Naive thymus-derived CD4-positive, alpha-beta T cell (primary cell): ENCODE measurements at regions of chr10 and their contacts with region 1.

Region 1: GRCh38 chr10:28241741-28242399 is 61.0 kb downstream of the MPP7 start:
- DNase-seq: peak in 7 of 9 donors; percentile 16 to 54 (median 43)
- ATAC-seq: peak; percentile 90
- H3K4me3 ChIP-seq: no peak overlapping the region
- H3K4me3 Mint-ChIP-seq: no peak overlapping the region
- H3K27ac ChIP-seq: no peak overlapping the region
- H3K27ac Mint-ChIP-seq: no peak overlapping the region
- H3K4me1 ChIP-seq: peaks cover 0 to 12% of the 10 kb centered on the region in 2 donors
- H3K4me1 Mint-ChIP-seq: peaks cover 5 to 59% (median 39%) of the 10 kb centered on the region in 7 donors
- H3K27me3 ChIP-seq: no peaks in the 10 kb centered on the region
- H3K27me3 Mint-ChIP-seq: peaks cover 0 to 12% (median 0%) of the 10 kb centered on the region in 5 donors

Region 2: DNA sequence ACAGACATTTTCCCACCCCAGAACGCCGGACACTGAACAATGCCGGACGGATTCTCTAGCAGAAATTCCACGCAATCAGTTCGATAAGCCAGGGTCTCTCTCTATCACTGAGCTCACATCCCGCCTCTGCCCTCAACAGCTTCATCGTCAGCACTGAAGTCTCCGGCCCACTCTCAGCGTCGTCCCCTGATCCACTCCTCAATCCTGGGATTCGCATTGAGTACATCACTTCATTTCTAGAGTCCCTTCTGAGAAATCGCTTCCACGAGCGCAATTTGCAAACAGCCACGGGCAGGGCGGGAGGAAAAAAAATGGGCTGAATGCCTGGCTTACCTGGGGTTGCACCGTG is 1088.1 kb before region 1 on chr10:
- CTCF ChIA-PET with region 1: no interaction called
- POLR2A ChIA-PET with region 1: no interaction called
- intact Hi-C with region 1: no loop called
- DNase-seq: no peak
- ATAC-seq: no peak
- H3K4me3 ChIP-seq: peak overlapping the region; percentile 90
- H3K4me3 Mint-ChIP-seq: peak overlapping the region; percentile 91 to 100 (median 99)
- H3K27ac ChIP-seq: peak overlapping the region; percentile 99
- H3K27ac Mint-ChIP-seq: peak overlapping the region; percentile 100
- H3K4me1 ChIP-seq: peaks cover 13 to 17% of the 10 kb centered on the region in 2 donors
- H3K4me1 Mint-ChIP-seq: peaks cover 34 to 69% (median 50%) of the 10 kb centered on the region in 7 donors
- H3K27me3 ChIP-seq: no peaks in the 10 kb centered on the region
- H3K27me3 Mint-ChIP-seq: peaks cover 0 to 2% (median 0%) of the 10 kb centered on the region in 5 donors

Region 3: GRCh38 chr10:27446091-27446918 is 795.6 kb before region 1 on chr10:
- CTCF ChIA-PET with region 1: interaction called, 3 read pairs
- POLR2A ChIA-PET with region 1: no interaction called
- intact Hi-C with region 1: loop called (anchors 1 to 5 kb)
- DNase-seq: peak in 6 of 9 donors; percentile 23 to 58 (median 46)
- ATAC-seq: peak; percentile 65
- H3K4me3 ChIP-seq: no peak overlapping the region
- H3K4me3 Mint-ChIP-seq: peak overlapping the region in 3 of 10 donors; percentile 20 to 53 (median 23)
- H3K27ac ChIP-seq: no peak overlapping the region
- H3K27ac Mint-ChIP-seq: peak overlapping the region in 1 of 9 donors; percentile 32
- H3K4me1 ChIP-seq: no peaks in the 10 kb centered on the region
- H3K4me1 Mint-ChIP-seq: peaks cover 6 to 19% (median 17%) of the 10 kb centered on the region in 7 donors
- H3K27me3 ChIP-seq: no peaks in the 10 kb centered on the region
- H3K27me3 Mint-ChIP-seq: peaks cover 0 to 16% (median 0%) of the 10 kb centered on the region in 5 donors

Region 4: DNA sequence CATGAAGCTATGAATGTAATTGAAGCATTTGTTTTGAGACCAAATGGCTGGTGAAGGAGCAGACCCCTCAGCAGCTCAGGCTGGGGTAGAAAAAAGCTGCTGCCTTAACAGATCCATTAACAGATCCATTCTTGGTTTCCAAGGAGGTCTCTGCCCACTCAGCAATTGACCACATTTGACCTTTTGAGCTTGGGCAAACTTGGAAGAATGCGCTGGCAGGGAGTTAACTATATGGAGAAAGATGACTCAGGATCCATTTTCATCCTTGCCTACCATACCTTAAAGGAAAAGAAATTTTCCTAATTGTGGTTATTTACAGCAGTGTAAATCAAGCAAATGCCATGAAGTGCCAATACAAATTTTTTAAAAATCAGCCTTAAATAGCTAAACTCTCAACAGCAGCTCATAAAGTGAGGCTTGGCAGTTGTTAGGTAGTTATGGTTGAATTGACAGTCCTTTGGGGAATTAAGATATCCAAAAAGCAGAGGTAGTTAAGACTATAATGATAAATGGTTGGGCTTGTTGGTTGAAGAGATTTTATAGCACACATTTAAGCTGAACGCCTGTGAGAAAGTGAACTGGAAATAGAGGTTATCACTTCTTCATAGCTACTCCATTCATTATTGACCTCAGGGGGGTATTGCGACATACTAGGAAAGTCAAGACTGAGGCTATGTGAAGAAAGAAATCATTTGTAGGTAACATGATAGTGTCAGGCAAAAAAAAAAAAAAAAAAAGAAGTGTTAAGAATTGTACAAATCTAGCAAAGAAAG is 580.2 kb before region 1 on chr10:
- CTCF ChIA-PET with region 1: no interaction called
- POLR2A ChIA-PET with region 1: no interaction called
- intact Hi-C with region 1: loop called in 1 of 2 experiments (anchors 5 kb)
- DNase-seq: no peak
- ATAC-seq: no peak
- H3K4me3 ChIP-seq: no peak overlapping the region
- H3K4me3 Mint-ChIP-seq: no peak overlapping the region
- H3K27ac ChIP-seq: no peak overlapping the region
- H3K27ac Mint-ChIP-seq: no peak overlapping the region
- H3K4me1 ChIP-seq: no peaks in the 10 kb centered on the region
- H3K4me1 Mint-ChIP-seq: peaks cover 0 to 7% (median 0%) of the 10 kb centered on the region in 7 donors
- H3K27me3 ChIP-seq: peaks cover 0 to 4% of the 10 kb centered on the region in 2 donors
- H3K27me3 Mint-ChIP-seq: peaks cover 31 to 53% (median 39%) of the 10 kb centered on the region in 5 donors

Region 5: GRCh38 chr10:27865221-27865638 is 376.6 kb before region 1 on chr10:
- CTCF ChIA-PET with region 1: no interaction called
- POLR2A ChIA-PET with region 1: no interaction called
- intact Hi-C with region 1: loop called in 1 of 2 experiments (anchors 5 kb)
- DNase-seq: no peak
- ATAC-seq: no peak
- H3K4me3 ChIP-seq: no peak overlapping the region
- H3K4me3 Mint-ChIP-seq: no peak overlapping the region
- H3K27ac ChIP-seq: no peak overlapping the region
- H3K27ac Mint-ChIP-seq: no peak overlapping the region
- H3K4me1 ChIP-seq: no peaks in the 10 kb centered on the region
- H3K4me1 Mint-ChIP-seq: no peaks in the 10 kb centered on the region
- H3K27me3 ChIP-seq: no peaks in the 10 kb centered on the region
- H3K27me3 Mint-ChIP-seq: peaks cover 0 to 34% (median 9%) of the 10 kb centered on the region in 5 donors

Region 6: DNA sequence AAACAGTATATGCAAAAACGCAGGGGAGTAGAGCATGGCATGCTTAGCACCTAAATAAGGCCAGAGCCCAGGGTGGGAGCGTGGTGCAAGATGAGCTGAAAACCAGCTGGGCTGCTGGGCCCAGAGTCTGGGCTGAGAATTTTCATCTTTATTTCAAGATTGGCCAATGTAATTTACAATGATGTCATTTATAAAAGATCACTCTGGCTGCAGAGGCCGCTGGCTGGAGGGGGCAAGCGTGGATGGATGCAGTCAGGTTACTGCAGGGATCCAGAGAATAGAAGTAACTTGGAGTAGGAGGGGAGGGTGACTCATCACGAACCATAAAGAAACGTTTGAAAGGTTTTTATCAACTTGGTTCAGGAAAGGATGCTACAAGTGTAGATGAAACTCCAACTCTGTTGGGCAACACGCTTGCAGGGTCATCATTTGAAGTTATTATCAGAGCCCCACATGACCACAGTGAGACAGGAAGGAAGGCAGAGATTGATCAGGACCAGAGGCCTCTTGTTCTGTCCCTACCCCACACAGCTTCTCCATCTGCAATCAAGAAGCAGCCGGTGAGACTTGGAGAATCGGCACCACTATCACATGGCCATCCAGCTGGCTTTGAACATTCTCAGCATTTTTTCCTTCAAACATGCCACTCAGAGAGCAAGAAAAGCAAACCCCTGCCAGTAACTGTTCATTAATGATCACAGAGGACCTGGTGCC is 292.2 kb before region 1 on chr10:
- CTCF ChIA-PET with region 1: no interaction called
- POLR2A ChIA-PET with region 1: no interaction called
- intact Hi-C with region 1: no loop called
- DNase-seq: no peak
- ATAC-seq: no peak
- H3K4me3 ChIP-seq: no peak overlapping the region
- H3K4me3 Mint-ChIP-seq: no peak overlapping the region
- H3K27ac ChIP-seq: no peak overlapping the region
- H3K27ac Mint-ChIP-seq: no peak overlapping the region
- H3K4me1 ChIP-seq: no peaks in the 10 kb centered on the region
- H3K4me1 Mint-ChIP-seq: no peaks in the 10 kb centered on the region
- H3K27me3 ChIP-seq: no peaks in the 10 kb centered on the region
- H3K27me3 Mint-ChIP-seq: peaks cover 5 to 10% (median 6%) of the 10 kb centered on the region in 5 donors

Region 7: GRCh38 chr10:28020080-28020860 is 221.6 kb before region 1 on chr10:
- CTCF ChIA-PET with region 1: no interaction called
- POLR2A ChIA-PET with region 1: no interaction called
- intact Hi-C with region 1: no loop called
- DNase-seq: no peak
- ATAC-seq: no peak
- H3K4me3 ChIP-seq: no peak overlapping the region
- H3K4me3 Mint-ChIP-seq: no peak overlapping the region
- H3K27ac ChIP-seq: no peak overlapping the region
- H3K27ac Mint-ChIP-seq: no peak overlapping the region
- H3K4me1 ChIP-seq: no peaks in the 10 kb centered on the region
- H3K4me1 Mint-ChIP-seq: peaks cover 0 to under 1% (median 0%) of the 10 kb centered on the region in 7 donors
- H3K27me3 ChIP-seq: no peaks in the 10 kb centered on the region
- H3K27me3 Mint-ChIP-seq: peaks cover 12 to 40% (median 22%) of the 10 kb centered on the region in 5 donors

Region 8: DNA sequence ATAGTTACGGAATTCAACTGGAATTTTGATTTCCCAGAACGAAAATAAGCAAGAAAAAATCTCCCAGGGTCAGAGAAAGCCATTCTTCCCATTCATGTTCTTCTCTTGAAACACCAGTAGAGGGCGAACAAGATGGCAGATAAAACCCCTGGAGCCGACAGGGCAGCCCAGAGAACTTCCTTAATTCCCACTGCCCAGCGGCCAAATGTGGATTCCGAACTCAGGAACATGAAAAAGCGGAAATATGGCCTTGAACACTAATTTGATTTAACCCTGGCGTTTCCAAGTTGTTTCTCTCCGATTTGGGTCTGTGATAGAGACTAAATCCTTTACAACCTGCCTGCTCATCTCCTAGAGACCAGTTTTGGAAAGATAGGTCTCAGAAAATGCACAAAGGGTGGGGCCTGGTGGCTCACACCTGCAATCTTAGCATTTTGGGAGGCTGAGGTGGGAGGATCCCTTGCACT is 190.4 kb after region 1 on chr10:
- CTCF ChIA-PET with region 1: no interaction called
- POLR2A ChIA-PET with region 1: no interaction called
- intact Hi-C with region 1: no loop called
- DNase-seq: peak in 7 of 9 donors; percentile 11 to 45 (median 35)
- ATAC-seq: peak; percentile 83
- H3K4me3 ChIP-seq: no peak overlapping the region
- H3K4me3 Mint-ChIP-seq: peak overlapping the region in 9 of 10 donors; percentile 17 to 80 (median 57)
- H3K27ac ChIP-seq: no peak overlapping the region
- H3K27ac Mint-ChIP-seq: no peak overlapping the region
- H3K4me1 ChIP-seq: no peaks in the 10 kb centered on the region
- H3K4me1 Mint-ChIP-seq: peaks cover 4 to 9% (median 7%) of the 10 kb centered on the region in 7 donors
- H3K27me3 ChIP-seq: no peaks in the 10 kb centered on the region
- H3K27me3 Mint-ChIP-seq: peaks cover 0 to 7% (median 0%) of the 10 kb centered on the region in 5 donors